ENCODE measurements at regions of chr2 and their contacts with region 1.

Region 1: GRCh38 chr2:74458132-74458925 is at the start of gene WBP1:
- DNase-seq: peak; percentile 100
- H3K4me3 ChIP-seq: peak within 1 kb of the TSS; percentile 65
- H3K4me3 Mint-ChIP-seq: peak within 1 kb of the TSS; percentile 95
- H3K27ac Mint-ChIP-seq: peak within 1 kb of the TSS; percentile 74
- H3K4me1 ChIP-seq: peaks cover 10% of the 10 kb centered on the region; the same call in 1 of the 2 replicates
- H3K4me1 Mint-ChIP-seq: peaks cover 42% of the 10 kb centered on the region
- H3K27me3 ChIP-seq: no peaks in the 10 kb centered on the region
- H3K27me3 Mint-ChIP-seq: no peaks in the 10 kb centered on the region
- CTCF ChIP-seq: no peak
- total RNA-seq, gene WBP1: 53.4 and 54.8 TPM in 2 replicates

Region 2: GRCh38 chr2:74425523-74425922 is 32.8 kb before region 1 on chr2:
- CTCF ChIA-PET with region 1: interaction called, 6 read pairs
- POLR2A ChIA-PET with region 1: interaction called, 3 read pairs
- intact Hi-C with region 1: loop called (anchors 2 kb)
- DNase-seq: no peak
- H3K4me3 ChIP-seq: no peak overlapping the region
- H3K4me3 Mint-ChIP-seq: no peak overlapping the region
- H3K27ac Mint-ChIP-seq: no peak overlapping the region
- H3K4me1 ChIP-seq: no peaks in the 10 kb centered on the region
- H3K4me1 Mint-ChIP-seq: peaks cover 14% of the 10 kb centered on the region
- H3K27me3 ChIP-seq: no peaks in the 10 kb centered on the region
- H3K27me3 Mint-ChIP-seq: peaks cover 2% of the 10 kb centered on the region
- CTCF ChIP-seq: no peak

Region 3: DNA sequence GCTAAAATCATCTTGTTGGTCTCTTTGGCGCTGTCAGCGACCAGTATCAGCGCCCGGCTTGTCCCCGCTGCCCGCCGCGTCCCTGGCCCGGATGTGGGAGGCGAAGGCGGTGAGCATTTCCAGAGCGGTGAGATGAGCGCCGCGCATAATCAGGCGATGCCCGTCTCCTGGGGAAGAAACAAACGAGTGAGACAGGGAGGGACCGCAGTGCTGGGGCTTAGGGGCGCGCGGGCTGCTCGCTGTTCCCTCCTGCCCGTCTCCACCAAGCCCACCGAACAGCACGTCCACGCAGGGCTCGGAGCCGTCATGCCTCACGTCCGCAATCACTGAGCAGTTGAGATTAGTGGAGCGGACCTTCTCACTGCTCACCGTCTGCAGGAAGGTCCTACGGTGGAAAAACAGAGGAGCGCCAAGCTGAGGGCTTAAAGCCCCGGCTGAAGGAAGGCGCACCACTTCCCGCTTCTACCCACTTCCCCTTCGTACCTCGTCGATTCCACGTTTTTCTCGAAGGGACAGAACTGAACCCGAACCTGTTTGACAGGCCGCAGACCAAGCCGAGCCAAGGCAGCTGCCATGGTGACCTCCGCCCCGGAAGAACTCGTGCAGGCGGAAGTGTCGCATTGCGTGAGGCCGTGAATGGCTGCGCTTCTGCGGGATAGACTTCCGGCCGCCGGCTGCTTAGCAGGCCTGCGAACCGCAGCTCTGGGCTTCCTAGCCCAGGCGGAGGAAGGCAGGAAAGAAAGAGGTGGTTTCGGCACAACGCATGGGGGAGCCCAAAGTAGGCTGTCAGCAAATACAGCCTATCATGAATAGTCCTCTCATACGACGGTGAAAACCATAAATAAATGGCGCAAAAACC is 14.0 kb after region 1 on chr2 and contains the start of gene MRPL53:
- CTCF ChIA-PET with region 1: interaction called, 6 read pairs
- POLR2A ChIA-PET with region 1: interaction called, 20 read pairs
- intact Hi-C with region 1: loop called (anchors 1 kb)
- DNase-seq: peak; percentile 97
- H3K4me3 ChIP-seq: peak within 1 kb of the TSS; percentile 65
- H3K4me3 Mint-ChIP-seq: peak within 1 kb of the TSS; percentile 93
- H3K27ac Mint-ChIP-seq: peak within 1 kb of the TSS; percentile 95
- H3K4me1 ChIP-seq: peaks cover 4% of the 10 kb centered on the region; the same call in 1 of the 2 replicates
- H3K4me1 Mint-ChIP-seq: peaks cover 8% of the 10 kb centered on the region
- H3K27me3 ChIP-seq: no peaks in the 10 kb centered on the region
- H3K27me3 Mint-ChIP-seq: no peaks in the 10 kb centered on the region
- CTCF ChIP-seq: no peak
- total RNA-seq, gene MRPL53: 88.4 and 102 TPM in 2 replicates

Region 4: GRCh38 chr2:74507145-74507925 is 49.0 kb after region 1 on chr2 and contains the start of gene PCGF1:
- CTCF ChIA-PET with region 1: interaction called, 4 read pairs
- POLR2A ChIA-PET with region 1: no interaction called
- intact Hi-C with region 1: loop called (anchors 2 kb)
- DNase-seq: peak; percentile 98 to 99
- H3K4me3 ChIP-seq: peak within 1 kb of the TSS; percentile 68
- H3K4me3 Mint-ChIP-seq: peak within 1 kb of the TSS; percentile 91
- H3K27ac Mint-ChIP-seq: peak within 1 kb of the TSS; percentile 99
- H3K4me1 ChIP-seq: peaks cover 26% of the 10 kb centered on the region
- H3K4me1 Mint-ChIP-seq: peaks cover 28% of the 10 kb centered on the region
- H3K27me3 ChIP-seq: no peaks in the 10 kb centered on the region
- H3K27me3 Mint-ChIP-seq: no peaks in the 10 kb centered on the region
- CTCF ChIP-seq: peak; percentile 70 to 89
- total RNA-seq, gene PCGF1: 27.0 and 29.7 TPM in 2 replicates

Measured in Caco-2 (cell line).